Thyroid gland (tissue), 4 donors: ENCODE measurements at regions of chr2 and their contacts with region 1.

Region 1: GRCh38 chr2:201118121-201118960 is 2.4 kb downstream of the CFLAR start:
- DNase-seq: peak; percentile 97
- H3K4me3 ChIP-seq: peak overlapping the region; percentile 33 to 78 (median 66)
- H3K27ac ChIP-seq: peak overlapping the region; percentile 98 to 100 (median 99)
- H3K4me1 ChIP-seq: peaks cover 35 to 48% of the 10 kb centered on the region in 2 donors
- H3K27me3 ChIP-seq: no peaks in the 10 kb centered on the region
- CTCF ChIP-seq: peak; percentile 24 to 54 (median 50)
- POLR2A ChIP-seq: peak in 1 of 2 donors; percentile 85

Region 2: DNA sequence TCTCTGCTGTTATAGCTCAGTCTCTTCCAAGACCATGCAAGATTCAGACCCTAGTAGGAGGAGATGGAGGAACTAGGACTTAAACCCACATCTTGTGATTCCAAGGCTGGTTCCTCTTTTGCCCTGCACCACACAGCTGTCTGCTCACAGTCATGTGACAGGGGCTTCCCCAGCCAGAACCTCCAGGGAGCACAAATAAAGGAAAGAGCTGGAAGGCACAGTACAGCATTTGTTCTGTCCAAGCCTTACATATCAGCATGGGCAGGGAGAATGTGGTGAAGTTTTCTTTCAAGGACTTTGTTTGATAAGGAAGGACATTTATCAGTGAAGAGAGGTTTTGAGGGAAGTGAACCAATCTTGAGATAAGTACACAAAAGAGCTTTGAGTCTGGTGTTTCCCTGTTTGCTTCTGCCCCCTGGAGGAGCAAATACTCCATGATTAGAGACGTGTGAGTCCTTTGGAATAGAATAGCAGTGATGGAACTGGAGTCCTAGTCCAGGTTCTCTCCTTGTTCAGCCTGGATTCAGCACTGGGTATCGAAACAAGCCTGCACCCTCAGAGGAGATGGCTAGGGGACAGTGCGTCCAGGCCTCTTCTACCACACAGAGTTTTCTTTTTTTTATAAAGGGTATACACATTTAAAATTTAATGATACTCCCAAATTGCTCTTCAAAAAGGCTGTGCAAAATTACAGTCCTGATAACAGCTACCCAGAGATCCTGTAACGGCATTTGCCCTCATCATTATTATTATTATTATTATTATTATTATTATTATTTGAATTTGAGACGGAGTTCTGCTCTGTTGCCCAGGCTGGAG is 40.0 kb after region 1 on chr2:
- intact Hi-C with region 1: loop called (anchors 5 kb)
- DNase-seq: peak; percentile 64 to 66
- H3K4me3 ChIP-seq: no peak overlapping the region
- H3K27ac ChIP-seq: peak overlapping the region; percentile 58 to 70 (median 70)
- H3K4me1 ChIP-seq: peaks cover 9 to 14% of the 10 kb centered on the region in 2 donors
- H3K27me3 ChIP-seq: no peaks in the 10 kb centered on the region
- CTCF ChIP-seq: peak in 5 of 6 experiments; percentile 22 to 72 (median 65)
- POLR2A ChIP-seq: peak in 1 of 2 donors; percentile 23

Region 3: GRCh38 chr2:201220102-201220570 is 101.8 kb after region 1 on chr2:
- intact Hi-C with region 1: loop called (anchors 10 kb)
- DNase-seq: peak; percentile 66 to 73
- H3K4me3 ChIP-seq: no peak overlapping the region
- H3K27ac ChIP-seq: peak overlapping the region in 2 of 3 donors; percentile 43 to 77
- H3K4me1 ChIP-seq: peaks cover 19 to 31% of the 10 kb centered on the region in 2 donors
- H3K27me3 ChIP-seq: no peaks in the 10 kb centered on the region
- CTCF ChIP-seq: no peak
- POLR2A ChIP-seq: no peak